Activated B cell treated with CpG ODN at 0.5 μM for 24 hours (primary cell): ENCODE measurements at regions of chr3 and their contacts with region 1.

Region 1: GRCh38 chr3:20080956-20081554 is 40.8 kb downstream of the KAT2B start:
- DNase-seq: no peak
- ATAC-seq: peak; percentile 96
- H3K4me3 Mint-ChIP-seq: peak overlapping the region; percentile 57
- H3K27ac Mint-ChIP-seq: peak overlapping the region; percentile 71
- H3K4me1 Mint-ChIP-seq: peaks cover 18% of the 10 kb centered on the region
- H3K27me3 Mint-ChIP-seq: no peaks in the 10 kb centered on the region
- CTCF ChIP-seq: no peak

Region 2: DNA sequence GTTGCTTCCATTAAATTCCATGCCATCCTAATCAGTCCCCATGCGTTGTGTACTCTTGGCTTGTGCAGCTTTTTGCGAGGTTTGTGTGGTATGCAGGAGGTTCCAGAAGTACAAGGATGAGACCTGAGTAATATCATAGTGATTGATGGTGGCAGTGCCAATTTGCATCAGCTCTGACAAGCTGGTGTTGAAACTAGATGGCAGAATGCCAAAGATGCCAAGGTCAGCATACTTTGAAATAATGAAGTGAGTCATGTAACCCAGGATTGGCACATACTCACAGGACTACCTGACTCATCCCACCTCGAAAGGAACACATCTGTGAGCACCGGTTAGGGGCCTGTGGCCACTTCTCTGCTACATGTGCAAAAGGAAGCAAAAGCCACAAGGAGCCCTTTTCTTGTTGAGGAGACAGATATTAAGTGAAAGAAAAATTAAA is 26.5 kb before region 1 on chr3:
- CTCF ChIA-PET with region 1: no interaction called
- POLR2A ChIA-PET with region 1: no interaction called
- intact Hi-C with region 1: loop called (anchors 2 kb)
- DNase-seq: peak; percentile 22
- ATAC-seq: peak; percentile 92
- H3K4me3 Mint-ChIP-seq: no peak overlapping the region
- H3K27ac Mint-ChIP-seq: no peak overlapping the region
- H3K4me1 Mint-ChIP-seq: peaks cover 33% of the 10 kb centered on the region
- H3K27me3 Mint-ChIP-seq: no peaks in the 10 kb centered on the region
- CTCF ChIP-seq: no peak

Region 3: GRCh38 chr3:20064837-20065564 is 16.1 kb before region 1 on chr3:
- CTCF ChIA-PET with region 1: no interaction called
- POLR2A ChIA-PET with region 1: no interaction called
- intact Hi-C with region 1: loop called (anchors 2 kb)
- DNase-seq: no peak
- ATAC-seq: no peak
- H3K4me3 Mint-ChIP-seq: no peak overlapping the region
- H3K27ac Mint-ChIP-seq: no peak overlapping the region
- H3K4me1 Mint-ChIP-seq: peaks cover 38% of the 10 kb centered on the region
- H3K27me3 Mint-ChIP-seq: no peaks in the 10 kb centered on the region
- CTCF ChIP-seq: no peak

Region 4: DNA sequence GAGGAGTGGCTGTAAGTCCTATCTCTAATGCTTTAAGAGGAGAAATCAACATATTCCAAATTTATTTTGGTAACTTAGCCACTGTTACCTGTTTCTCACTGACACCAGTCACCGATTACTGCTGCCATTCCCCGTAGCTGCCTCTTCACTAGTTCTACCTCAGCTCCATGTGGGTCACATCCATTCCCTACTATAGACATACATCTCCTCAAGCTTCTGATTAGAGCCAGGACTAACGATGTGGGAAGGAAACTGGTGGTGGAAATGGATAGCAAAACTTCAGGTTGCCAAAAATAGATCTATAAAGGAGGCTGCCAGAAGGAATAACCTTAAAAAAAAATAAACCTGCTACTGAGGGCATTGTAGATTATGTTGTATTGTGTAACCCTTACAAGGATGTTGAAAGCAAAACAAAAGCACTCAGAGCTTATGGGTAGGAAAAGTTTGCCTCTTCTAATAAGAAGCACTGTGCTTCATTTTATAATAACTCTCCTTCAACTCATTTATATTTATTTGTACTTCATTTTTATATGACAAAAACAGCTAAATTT is 15.2 kb after region 1 on chr3:
- CTCF ChIA-PET with region 1: no interaction called
- POLR2A ChIA-PET with region 1: no interaction called
- intact Hi-C with region 1: loop called (anchors 2 kb)
- DNase-seq: no peak
- ATAC-seq: no peak
- H3K4me3 Mint-ChIP-seq: no peak overlapping the region
- H3K27ac Mint-ChIP-seq: no peak overlapping the region
- H3K4me1 Mint-ChIP-seq: peaks cover 5% of the 10 kb centered on the region
- H3K27me3 Mint-ChIP-seq: no peaks in the 10 kb centered on the region
- CTCF ChIP-seq: no peak

Region 5: GRCh38 chr3:20125897-20126296 is 44.8 kb after region 1 on chr3:
- CTCF ChIA-PET with region 1: no interaction called
- POLR2A ChIA-PET with region 1: no interaction called
- intact Hi-C with region 1: loop called (anchors 1 kb)
- DNase-seq: peak; percentile 39
- ATAC-seq: peak; percentile 95
- H3K4me3 Mint-ChIP-seq: peak overlapping the region; percentile 58
- H3K27ac Mint-ChIP-seq: peak overlapping the region; percentile 87
- H3K4me1 Mint-ChIP-seq: peaks cover 38% of the 10 kb centered on the region
- H3K27me3 Mint-ChIP-seq: no peaks in the 10 kb centered on the region
- CTCF ChIP-seq: no peak